OCI-LY7 (cell line): ENCODE measurements at regions of chr19 and their contacts with region 1.

Region 1: DNA sequence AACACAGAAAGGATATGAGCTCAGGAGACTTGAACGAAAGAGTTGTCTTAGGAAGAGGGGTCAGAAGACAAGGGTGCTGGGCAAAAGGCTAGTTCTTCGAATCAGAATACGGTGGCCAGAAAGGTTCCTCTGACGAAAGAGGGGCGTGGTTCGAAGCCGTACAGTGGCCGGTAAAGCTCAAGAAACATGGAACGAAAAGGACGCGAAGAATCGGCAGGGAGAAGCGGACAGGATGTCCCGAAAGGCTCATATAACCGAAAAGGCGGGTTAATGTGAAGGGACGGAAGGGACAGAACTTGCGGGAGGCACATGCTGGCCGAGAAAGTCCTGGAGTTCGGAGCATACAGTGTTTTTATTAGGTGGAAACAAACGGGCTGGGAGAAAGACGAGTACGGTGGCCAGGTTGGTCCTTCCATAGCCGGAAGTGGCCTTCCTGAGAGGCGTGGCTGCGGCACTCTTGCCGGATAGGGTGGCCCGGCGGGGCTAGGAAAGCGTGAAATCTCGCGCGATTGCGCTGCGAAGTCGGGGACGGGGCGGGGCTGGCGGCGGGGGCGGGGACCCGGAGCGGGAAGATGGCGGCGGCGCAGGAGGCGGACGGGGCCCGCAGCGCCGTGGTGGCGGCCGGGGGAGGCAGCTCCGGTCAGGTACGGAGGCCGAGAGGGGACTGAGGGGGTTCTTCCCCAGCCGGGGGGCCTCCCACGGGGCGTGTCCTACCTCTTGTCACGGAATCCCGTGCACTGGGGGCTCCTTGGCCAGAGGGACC is at the start of gene CLPTM1:
- DNase-seq: peak; percentile 97
- H3K4me3 ChIP-seq: peak within 1 kb of the TSS; percentile 75
- H3K27ac ChIP-seq: peak within 1 kb of the TSS; percentile 82
- H3K4me1 ChIP-seq: peaks cover 51% of the 10 kb centered on the region
- CTCF ChIP-seq: no peak
- total RNA-seq, gene CLPTM1: 32.2 and 34.0 TPM in 2 replicates

Region 2: DNA sequence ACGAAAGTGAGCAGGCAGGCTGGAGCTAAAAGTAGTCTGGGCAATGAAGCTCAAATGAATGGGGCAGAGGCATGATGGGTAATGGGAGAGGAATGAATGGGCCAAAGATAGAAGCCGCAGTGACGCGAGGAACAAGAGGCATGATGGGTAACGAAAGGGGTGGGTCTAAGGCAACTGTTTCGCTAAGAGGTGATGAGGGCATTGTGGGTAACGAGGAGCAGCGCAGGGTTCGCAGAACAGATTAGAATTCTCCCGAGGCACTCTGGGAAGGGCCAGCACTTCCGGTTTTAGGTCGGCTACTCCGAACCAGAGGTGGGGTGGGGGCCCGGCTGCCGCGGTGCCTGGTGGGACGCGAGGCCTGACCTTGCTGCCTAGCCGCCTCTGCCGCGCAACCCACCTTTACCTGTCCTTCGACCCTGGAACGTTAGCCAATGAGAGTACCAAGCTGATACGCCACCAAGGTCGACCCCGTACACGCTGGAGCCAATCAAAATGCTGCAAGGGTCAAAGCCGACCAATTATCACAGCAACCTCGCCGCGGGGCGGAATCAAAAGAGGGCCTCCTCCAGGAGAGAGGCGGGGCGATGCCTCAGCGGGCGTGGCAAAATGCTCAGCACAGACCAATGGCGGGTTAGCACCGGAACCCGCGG is 64.5 kb before region 1 on chr19:
- CTCF ChIA-PET with region 1: no interaction called
- POLR2A ChIA-PET with region 1: interaction called, 5 read pairs
- intact Hi-C with region 1: loop called (anchors 5 kb)
- DNase-seq: peak; percentile 100
- H3K4me3 ChIP-seq: peak overlapping the region; percentile 66
- H3K27ac ChIP-seq: peak overlapping the region; percentile 90
- H3K4me1 ChIP-seq: peaks cover 18% of the 10 kb centered on the region
- CTCF ChIP-seq: no peak

Region 3: GRCh38 chr19:44903602-44904425 is 51.2 kb before region 1 on chr19:
- CTCF ChIA-PET with region 1: interaction called, 3 read pairs
- POLR2A ChIA-PET with region 1: no interaction called
- intact Hi-C with region 1: loop called (anchors 2 kb)
- DNase-seq: peak; percentile 64
- H3K4me3 ChIP-seq: no peak overlapping the region
- H3K27ac ChIP-seq: peak overlapping the region; percentile 18
- H3K4me1 ChIP-seq: peaks cover 15% of the 10 kb centered on the region
- CTCF ChIP-seq: peak; percentile 97

Region 4: DNA sequence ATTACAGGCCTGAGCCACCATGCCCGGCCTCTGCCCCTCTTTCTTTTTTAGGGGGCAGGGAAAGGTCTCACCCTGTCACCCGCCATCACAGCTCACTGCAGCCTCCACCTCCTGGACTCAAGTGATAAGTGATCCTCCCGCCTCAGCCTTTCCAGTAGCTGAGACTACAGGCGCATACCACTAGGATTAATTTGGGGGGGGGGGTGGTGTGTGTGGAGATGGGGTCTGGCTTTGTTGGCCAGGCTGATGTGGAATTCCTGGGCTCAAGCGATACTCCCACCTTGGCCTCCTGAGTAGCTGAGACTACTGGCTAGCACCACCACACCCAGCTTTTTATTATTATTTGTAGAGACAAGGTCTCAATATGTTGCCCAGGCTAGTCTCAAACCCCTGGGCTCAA is 45.2 kb before region 1 on chr19:
- CTCF ChIA-PET with region 1: no interaction called
- POLR2A ChIA-PET with region 1: no interaction called
- intact Hi-C with region 1: loop called (anchors 2 kb)
- DNase-seq: no peak
- H3K4me3 ChIP-seq: no peak overlapping the region
- H3K27ac ChIP-seq: no peak overlapping the region
- H3K4me1 ChIP-seq: peaks cover 13% of the 10 kb centered on the region
- CTCF ChIP-seq: no peak

Region 5: DNA sequence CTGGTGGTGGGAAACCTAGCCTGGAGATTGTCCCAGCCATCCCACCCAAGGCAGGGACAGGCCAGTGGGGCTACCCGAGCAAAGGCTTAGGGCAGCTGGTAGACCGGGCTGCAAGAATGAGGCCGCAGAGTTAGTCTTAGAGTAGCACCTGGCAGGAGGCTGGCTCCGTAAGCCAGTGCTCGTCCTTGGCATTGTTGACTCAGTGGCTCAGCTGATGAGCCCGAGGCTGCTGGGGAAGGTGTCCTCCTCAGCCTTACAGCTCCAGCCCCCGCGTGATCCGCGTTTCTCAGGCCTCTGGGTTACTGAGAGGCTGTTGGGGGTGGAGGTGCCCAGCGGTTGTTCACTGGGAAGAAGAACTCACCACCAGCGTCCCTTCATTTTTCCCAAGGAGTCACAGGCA is 162.7 kb after region 1 on chr19:
- CTCF ChIA-PET with region 1: no interaction called
- POLR2A ChIA-PET with region 1: no interaction called
- intact Hi-C with region 1: no loop called
- DNase-seq: no peak
- H3K4me3 ChIP-seq: no peak overlapping the region
- H3K27ac ChIP-seq: peak overlapping the region; percentile 66
- H3K4me1 ChIP-seq: peaks cover 55% of the 10 kb centered on the region
- CTCF ChIP-seq: no peak